AG04449 (cell line): ENCODE measurements at regions of chr6 and their contacts with region 1.

Region 1: DNA sequence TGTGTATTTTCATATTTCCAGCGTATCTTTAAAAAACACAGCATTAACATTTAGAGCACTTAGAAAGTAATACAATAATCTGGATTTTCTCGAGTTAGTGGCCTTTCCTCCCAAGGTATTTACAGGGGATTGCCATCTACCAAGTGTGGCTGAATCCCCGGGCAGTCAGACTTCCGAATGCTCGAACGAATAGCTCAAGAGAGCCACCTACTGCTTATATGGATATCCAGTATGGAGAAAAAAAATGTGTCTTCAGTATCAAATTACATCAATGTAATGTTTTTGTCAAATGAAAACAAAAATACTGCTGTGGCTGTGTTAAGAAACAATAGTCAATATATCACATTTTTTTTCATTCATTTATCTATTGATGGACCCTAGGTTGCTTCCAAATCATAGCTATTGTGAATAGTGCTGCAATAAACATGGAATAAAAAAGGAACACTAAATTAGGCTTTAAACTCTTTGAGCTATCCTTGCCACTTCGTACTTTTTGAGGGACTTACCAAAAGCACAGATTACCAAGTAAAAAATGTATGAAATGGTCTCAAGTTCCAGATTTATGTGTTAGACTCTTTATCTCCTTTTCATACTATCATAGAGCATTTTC is 654.5 kb upstream of the PTCHD4 start:
- DNase-seq: no peak
- H3K4me3 ChIP-seq: no peak overlapping the region
- CTCF ChIP-seq: peak; percentile 49

Region 2: DNA sequence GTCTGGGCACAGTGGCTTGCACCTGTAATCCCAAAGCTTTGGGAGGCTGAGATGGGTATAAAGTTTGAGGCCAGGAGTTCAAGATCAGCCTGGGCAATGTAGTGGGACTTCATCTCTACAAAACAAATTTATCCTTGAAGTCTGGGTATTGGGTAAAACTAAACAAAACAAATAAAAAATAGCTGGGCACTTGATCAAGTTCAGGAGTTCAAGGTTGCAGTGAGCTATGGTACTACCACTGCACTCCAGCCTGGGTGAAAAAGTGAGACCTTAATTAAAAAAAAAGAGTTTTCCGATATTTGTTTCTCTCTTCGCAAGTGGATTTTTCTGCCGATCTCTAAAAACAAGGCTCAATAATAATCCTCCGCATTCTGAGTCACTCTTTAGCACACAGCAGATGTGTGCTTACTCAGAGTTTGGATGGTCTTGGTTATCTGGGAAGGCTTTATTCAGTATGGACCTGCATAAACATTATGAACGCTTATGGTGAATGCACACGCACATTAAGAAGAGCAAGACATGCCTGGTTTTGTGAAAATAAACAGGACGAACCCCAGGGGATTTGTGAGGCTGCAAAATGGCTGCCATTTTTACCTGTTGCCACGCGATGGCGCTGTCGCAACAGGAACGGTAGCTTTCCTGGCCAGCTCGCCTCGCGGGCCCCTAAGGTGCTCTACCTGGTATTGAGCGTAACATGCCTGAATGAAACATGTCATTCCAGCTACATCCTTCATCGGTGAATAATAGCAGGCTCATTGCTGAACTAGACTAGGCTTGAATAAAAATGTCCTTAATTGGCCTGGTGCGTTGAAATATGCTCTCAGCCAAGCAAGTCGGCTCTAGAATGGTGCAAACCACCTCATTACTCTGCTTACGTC is 977.6 kb before region 1 on chr6:
- CTCF ChIA-PET with region 1: interaction called, 42 read pairs
- POLR2A ChIA-PET with region 1: no interaction called
- DNase-seq: no peak
- H3K4me3 ChIP-seq: no peak overlapping the region
- CTCF ChIP-seq: peak; percentile 86

Region 3: GRCh38 chr6:48087448-48087847 is 678.0 kb before region 1 on chr6:
- CTCF ChIA-PET with region 1: interaction called, 27 read pairs
- POLR2A ChIA-PET with region 1: no interaction called
- DNase-seq: no peak
- H3K4me3 ChIP-seq: no peak overlapping the region
- CTCF ChIP-seq: no peak